GM12878 (cell line): ENCODE measurements at regions of chr18 and their contacts with region 1.

Region 1: DNA sequence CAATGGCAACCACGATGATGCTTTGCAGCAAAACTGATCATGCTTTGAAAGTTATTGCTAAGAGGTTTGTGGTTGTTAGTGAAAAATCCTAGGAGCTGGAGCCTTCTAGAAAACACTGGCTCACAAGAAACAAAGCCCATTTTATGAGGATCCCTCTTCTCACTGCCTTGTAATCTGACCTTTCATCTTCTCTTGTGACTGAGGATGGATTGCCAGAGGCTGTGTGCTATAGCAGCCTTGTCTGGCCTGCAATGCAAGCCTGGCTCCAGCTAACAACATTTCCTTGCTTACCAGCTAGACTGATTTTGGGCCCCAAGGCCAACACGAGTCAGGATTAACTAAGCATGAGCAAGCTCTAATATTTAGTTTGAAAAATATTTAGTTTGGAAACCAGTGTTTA is 13.1 kb downstream of the PIEZO2 start:
- DNase-seq: no peak
- ATAC-seq: no peak
- H3K4me3 ChIP-seq: no peak overlapping the region
- H3K27ac ChIP-seq: no peak overlapping the region
- H3K4me1 ChIP-seq: no peaks in the 10 kb centered on the region
- H3K27me3 ChIP-seq: no peaks in the 10 kb centered on the region
- CTCF ChIP-seq: no peak
- EP300 ChIP-seq: no peak
- POLR2A ChIP-seq: no peak
- RAD21 ChIP-seq: no peak

Region 2: DNA sequence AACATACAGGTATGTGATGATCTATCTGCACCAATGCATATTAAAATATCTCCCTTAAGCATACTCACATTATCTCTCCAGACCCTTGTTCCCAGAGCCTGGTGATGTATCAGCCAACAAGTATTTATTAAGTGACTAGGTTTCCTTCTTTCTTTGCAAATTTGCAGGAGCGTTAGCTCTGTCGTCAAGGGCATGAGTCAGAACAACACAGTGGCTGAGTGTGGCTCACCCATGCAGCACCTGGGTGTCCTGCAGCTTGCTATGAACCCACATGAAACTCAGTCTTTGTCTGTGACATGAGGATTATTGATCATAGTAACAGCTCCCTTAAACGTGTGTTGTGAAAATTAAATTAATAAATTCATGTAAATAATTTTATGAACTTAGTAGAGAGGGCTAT is 83.4 kb before region 1 on chr18:
- CTCF ChIA-PET with region 1: no interaction called
- POLR2A ChIA-PET with region 1: no interaction called
- RAD21 ChIA-PET with region 1: interaction called, 5 read pairs
- SMC1A ChIA-PET with region 1: interaction called, 13 read pairs
- in situ Hi-C with region 1: no loop called
- intact Hi-C with region 1: no loop called
- DNase-seq: no peak
- ATAC-seq: peak; percentile 92
- H3K4me3 ChIP-seq: no peak overlapping the region
- H3K27ac ChIP-seq: peak overlapping the region; percentile 22; the same call in 1 of the 2 replicates
- H3K4me1 ChIP-seq: peaks cover 15% of the 10 kb centered on the region
- H3K27me3 ChIP-seq: no peaks in the 10 kb centered on the region
- CTCF ChIP-seq: no peak
- EP300 ChIP-seq: no peak; a peak in 1 of 4 replicates
- POLR2A ChIP-seq: no peak
- RAD21 ChIP-seq: no peak

Region 3: GRCh38 chr18:11119962-11120361 is 16.3 kb before region 1 on chr18:
- CTCF ChIA-PET with region 1: interaction called, 10 read pairs
- POLR2A ChIA-PET with region 1: interaction called, 6 read pairs
- RAD21 ChIA-PET with region 1: interaction called, 3 read pairs
- SMC1A ChIA-PET with region 1: interaction called, 15 read pairs
- in situ Hi-C with region 1: no loop called
- intact Hi-C with region 1: no loop called
- DNase-seq: no peak
- ATAC-seq: no peak
- H3K4me3 ChIP-seq: no peak overlapping the region
- H3K27ac ChIP-seq: no peak overlapping the region
- H3K4me1 ChIP-seq: no peaks in the 10 kb centered on the region
- H3K27me3 ChIP-seq: no peaks in the 10 kb centered on the region
- CTCF ChIP-seq: no peak
- EP300 ChIP-seq: no peak
- POLR2A ChIP-seq: no peak
- RAD21 ChIP-seq: no peak